ENCODE measurements at regions of chr9 and their contacts with region 1.

Region 1: DNA sequence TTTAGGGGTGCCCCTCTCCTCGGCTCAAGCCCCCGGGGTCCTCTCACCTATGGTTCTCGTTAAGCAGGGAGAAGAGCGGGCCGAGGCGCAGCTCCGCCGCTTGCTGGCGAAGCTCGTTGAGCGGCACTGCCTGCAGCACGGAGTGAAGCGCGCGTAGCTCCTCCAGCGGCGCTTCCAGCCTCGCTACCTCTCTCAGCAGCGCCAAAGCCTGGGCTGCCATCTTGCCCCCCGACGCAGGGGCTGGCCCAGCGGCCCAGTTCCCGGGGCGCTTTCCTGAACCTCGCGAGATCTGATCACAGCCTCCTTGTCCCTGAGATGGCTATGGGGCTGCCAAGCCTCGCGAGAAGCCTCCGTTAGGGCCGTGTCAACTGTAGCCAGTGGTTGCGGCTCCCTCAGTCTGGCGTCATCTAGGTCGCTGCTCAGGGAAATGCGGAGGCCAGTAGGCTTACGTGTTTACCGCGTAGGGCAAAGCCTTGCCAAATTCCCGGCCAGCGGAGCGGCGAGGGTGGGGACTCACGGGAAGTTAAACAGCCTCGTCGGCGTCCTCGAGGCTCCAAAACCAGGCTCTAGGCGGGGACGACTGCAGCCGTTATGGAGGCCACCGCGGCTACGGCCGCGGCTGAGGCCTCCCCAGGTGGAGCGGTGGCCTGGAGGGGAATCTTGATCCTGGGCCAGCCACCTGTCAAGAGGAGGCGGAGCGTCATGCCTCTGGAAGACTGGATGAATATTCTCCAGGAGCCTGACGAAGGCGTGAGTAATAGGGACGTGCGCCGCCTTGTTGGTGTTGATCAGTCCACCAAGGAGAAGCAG is at the start of gene PSMD5:
- DNase-seq: peak; percentile 89 to 99 (median 92)
- ATAC-seq: peak; percentile 86
- H3K4me3 ChIP-seq: peak within 1 kb of the TSS; percentile 93
- H3K4me3 Mint-ChIP-seq: peak within 1 kb of the TSS; percentile 96
- H3K27ac ChIP-seq: peak within 1 kb of the TSS; percentile 93 to 98
- H3K27ac Mint-ChIP-seq: peak within 1 kb of the TSS; percentile 99
- H3K4me1 ChIP-seq: peaks cover 63% of the 10 kb centered on the region
- H3K4me1 Mint-ChIP-seq: peaks cover 79% of the 10 kb centered on the region
- H3K27me3 ChIP-seq: no peaks in the 10 kb centered on the region
- H3K27me3 Mint-ChIP-seq: no peaks in the 10 kb centered on the region
- CTCF ChIP-seq: no peak
- total RNA-seq, gene PSMD5: 35.4 to 44.3 TPM

Region 2: DNA sequence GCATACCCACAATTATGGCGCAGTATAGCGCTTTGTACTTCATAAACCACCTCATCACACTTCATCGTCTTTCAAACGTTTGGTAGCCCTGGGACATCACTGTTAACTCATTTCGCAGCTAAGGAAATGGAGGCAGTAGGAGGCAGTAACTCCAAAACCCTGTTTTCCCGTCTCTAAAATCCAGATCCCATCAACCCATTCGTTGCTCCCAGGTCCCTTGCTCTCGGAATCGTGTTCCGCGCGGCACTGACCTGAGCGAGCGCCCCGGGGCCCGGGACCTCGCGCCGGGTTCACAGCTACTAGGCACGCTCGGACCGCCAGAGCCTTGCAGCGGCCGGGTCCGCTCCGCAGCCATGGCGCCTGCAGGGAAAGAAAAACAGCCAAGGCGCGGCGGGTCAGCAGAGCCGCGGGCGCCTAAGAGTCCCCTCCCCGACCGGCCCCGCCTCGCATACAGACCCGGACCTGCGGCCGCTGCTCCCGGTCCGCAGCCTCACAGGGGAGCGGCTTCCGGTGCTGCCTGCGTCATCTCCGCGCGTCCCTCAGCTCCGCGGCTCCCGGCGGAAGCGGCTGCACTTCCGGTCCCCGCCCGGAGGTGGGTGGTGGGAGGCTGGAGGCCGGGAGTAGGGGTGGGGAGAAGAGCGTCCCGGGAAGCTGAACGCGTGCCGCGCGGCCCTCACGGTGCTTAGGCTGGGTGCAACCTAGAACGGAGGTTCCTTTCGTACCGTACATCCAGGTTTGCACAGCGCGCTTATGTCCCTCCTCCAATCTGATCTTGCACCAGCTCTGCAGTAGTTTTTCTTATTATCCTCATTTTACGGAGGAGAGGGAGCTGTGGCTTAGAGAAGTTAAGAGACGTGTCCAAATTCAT is 49.8 kb before region 1 on chr9 and contains the start of gene FBXW2:
- CTCF ChIA-PET with region 1: interaction called, 4 read pairs
- POLR2A ChIA-PET with region 1: interaction called, 54 read pairs
- intact Hi-C with region 1: loop called (anchors 2 kb)
- DNase-seq: peak; percentile 58 to 92 (median 78)
- ATAC-seq: peak; percentile 79
- H3K4me3 ChIP-seq: peak within 1 kb of the TSS; percentile 97
- H3K4me3 Mint-ChIP-seq: peak within 1 kb of the TSS; percentile 88
- H3K27ac ChIP-seq: peak within 1 kb of the TSS; percentile 81 to 82
- H3K27ac Mint-ChIP-seq: peak within 1 kb of the TSS; percentile 92
- H3K4me1 ChIP-seq: peaks cover 39% of the 10 kb centered on the region
- H3K4me1 Mint-ChIP-seq: peaks cover 63% of the 10 kb centered on the region
- H3K27me3 ChIP-seq: no peaks in the 10 kb centered on the region
- H3K27me3 Mint-ChIP-seq: no peaks in the 10 kb centered on the region
- CTCF ChIP-seq: no peak
- total RNA-seq, gene FBXW2: 58.7 to 64.7 TPM

Region 3: GRCh38 chr9:120875954-120876841 is 33.3 kb after region 1 on chr9:
- CTCF ChIA-PET with region 1: interaction called, 4 read pairs
- POLR2A ChIA-PET with region 1: interaction called, 19 read pairs
- intact Hi-C with region 1: no loop called
- DNase-seq: peak; percentile 53 to 93 (median 84)
- ATAC-seq: peak; percentile 49
- H3K4me3 ChIP-seq: peak overlapping the region; percentile 64
- H3K4me3 Mint-ChIP-seq: peak overlapping the region; percentile 85
- H3K27ac ChIP-seq: peak overlapping the region; percentile 87 to 93
- H3K27ac Mint-ChIP-seq: peak overlapping the region; percentile 84
- H3K4me1 ChIP-seq: peaks cover 83% of the 10 kb centered on the region
- H3K4me1 Mint-ChIP-seq: peaks cover 75% of the 10 kb centered on the region
- H3K27me3 ChIP-seq: no peaks in the 10 kb centered on the region
- H3K27me3 Mint-ChIP-seq: no peaks in the 10 kb centered on the region
- CTCF ChIP-seq: no peak

Region 4: DNA sequence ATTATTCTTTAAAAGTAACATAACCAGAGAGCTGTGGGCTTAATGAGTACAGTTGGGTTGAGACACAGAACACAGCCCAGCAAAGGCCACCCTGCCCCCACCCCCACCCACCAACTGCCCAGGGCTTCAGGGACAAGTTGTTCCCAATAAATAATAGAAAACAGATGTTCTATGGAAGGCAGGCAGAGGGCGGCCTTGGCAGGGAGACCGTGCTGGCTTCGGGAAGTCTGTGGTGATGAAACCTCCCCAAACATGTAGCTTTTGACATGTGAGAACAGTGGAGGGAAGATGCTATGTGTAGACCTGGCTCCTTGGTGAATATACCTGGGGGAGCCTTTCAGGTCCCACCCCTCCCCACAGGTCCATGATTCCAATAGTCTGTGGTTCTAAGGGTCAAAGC is 73.7 kb after region 1 on chr9:
- CTCF ChIA-PET with region 1: no interaction called
- POLR2A ChIA-PET with region 1: interaction called, 12 read pairs
- intact Hi-C with region 1: no loop called
- DNase-seq: no peak
- ATAC-seq: no peak
- H3K4me3 ChIP-seq: no peak overlapping the region
- H3K4me3 Mint-ChIP-seq: no peak overlapping the region
- H3K27ac ChIP-seq: peak overlapping the region; percentile 43
- H3K27ac Mint-ChIP-seq: peak overlapping the region; percentile 90
- H3K4me1 ChIP-seq: peaks cover 96% of the 10 kb centered on the region
- H3K4me1 Mint-ChIP-seq: peaks cover 88% of the 10 kb centered on the region
- H3K27me3 ChIP-seq: no peaks in the 10 kb centered on the region
- H3K27me3 Mint-ChIP-seq: no peaks in the 10 kb centered on the region
- CTCF ChIP-seq: no peak

Region 5: GRCh38 chr9:121059998-121060636 is 217.2 kb after region 1 on chr9:
- CTCF ChIA-PET with region 1: interaction called, 3 read pairs
- POLR2A ChIA-PET with region 1: interaction called, 7 read pairs
- intact Hi-C with region 1: loop called in 1 of 2 experiments (anchors 1 kb)
- DNase-seq: peak in 7 of 14 experiments; percentile 9 to 76 (median 59)
- ATAC-seq: no peak
- H3K4me3 ChIP-seq: no peak overlapping the region
- H3K4me3 Mint-ChIP-seq: no peak overlapping the region
- H3K27ac ChIP-seq: no peak overlapping the region
- H3K27ac Mint-ChIP-seq: no peak overlapping the region
- H3K4me1 ChIP-seq: peaks cover 5% of the 10 kb centered on the region
- H3K4me1 Mint-ChIP-seq: peaks cover 18% of the 10 kb centered on the region
- H3K27me3 ChIP-seq: no peaks in the 10 kb centered on the region
- H3K27me3 Mint-ChIP-seq: no peaks in the 10 kb centered on the region
- CTCF ChIP-seq: peak; percentile 77

Region 6: DNA sequence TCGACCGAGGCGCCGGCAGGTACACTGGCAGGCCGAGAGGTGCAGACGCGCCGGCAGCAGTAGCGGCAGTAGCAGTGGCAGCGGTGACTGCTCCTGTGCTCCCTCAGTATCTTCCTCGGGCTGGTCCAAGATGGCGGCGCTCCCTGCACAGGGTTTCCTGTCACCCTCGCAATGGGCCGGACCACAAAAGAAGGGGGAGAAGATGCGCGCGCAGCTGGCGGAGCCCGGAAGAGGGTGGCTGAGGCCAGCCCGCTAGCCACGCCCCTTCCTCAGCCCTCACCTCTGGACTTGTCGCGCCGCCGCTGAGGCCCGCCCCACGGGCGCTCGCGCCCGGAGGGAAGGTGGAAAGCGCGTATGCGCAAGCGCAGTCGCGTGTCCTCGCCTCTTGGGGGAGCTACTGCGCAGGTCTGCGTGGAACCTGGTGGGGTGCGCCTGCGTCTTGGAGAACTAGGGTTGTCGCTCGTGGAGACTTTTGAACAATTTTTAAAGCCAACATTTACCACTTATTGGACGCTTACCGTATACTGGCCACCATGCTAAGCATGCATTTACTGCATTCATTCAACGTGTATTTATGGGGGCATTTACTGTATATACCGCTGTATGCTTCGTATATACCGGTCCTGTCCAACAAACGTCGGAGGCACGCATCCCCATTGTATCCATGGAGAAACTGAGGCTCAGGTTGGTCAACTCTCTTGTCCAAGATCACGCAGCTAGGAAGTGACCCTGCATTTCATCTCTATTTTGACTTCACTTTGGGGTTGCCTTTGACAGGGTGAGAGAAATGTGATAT is 359.0 kb after region 1 on chr9 and contains the start of gene RAB14:
- CTCF ChIA-PET with region 1: no interaction called
- POLR2A ChIA-PET with region 1: interaction called, 3 read pairs
- intact Hi-C with region 1: loop called in 1 of 2 experiments (anchors 5 kb)
- DNase-seq: peak; percentile 100
- ATAC-seq: peak; percentile 89
- H3K4me3 ChIP-seq: peak within 1 kb of the TSS; percentile 75
- H3K4me3 Mint-ChIP-seq: peak within 1 kb of the TSS; percentile 96
- H3K27ac ChIP-seq: peak within 1 kb of the TSS; percentile 76 to 87
- H3K27ac Mint-ChIP-seq: peak within 1 kb of the TSS; percentile 91
- H3K4me1 ChIP-seq: peaks cover 11% of the 10 kb centered on the region
- H3K4me1 Mint-ChIP-seq: peaks cover 49% of the 10 kb centered on the region
- H3K27me3 ChIP-seq: no peaks in the 10 kb centered on the region
- H3K27me3 Mint-ChIP-seq: no peaks in the 10 kb centered on the region
- CTCF ChIP-seq: peak; percentile 62
- total RNA-seq, gene RAB14: 57.4 to 58.2 TPM

Region 7: GRCh38 chr9:121698627-121699570 is 856.0 kb after region 1 on chr9:
- CTCF ChIA-PET with region 1: no interaction called
- POLR2A ChIA-PET with region 1: no interaction called
- intact Hi-C with region 1: no loop called
- DNase-seq: peak in 10 of 14 experiments; percentile 5 to 68 (median 34)
- ATAC-seq: peak; percentile 34
- H3K4me3 ChIP-seq: no peak overlapping the region
- H3K4me3 Mint-ChIP-seq: no peak overlapping the region
- H3K27ac ChIP-seq: no peak overlapping the region
- H3K27ac Mint-ChIP-seq: no peak overlapping the region
- H3K4me1 ChIP-seq: peaks cover 16% of the 10 kb centered on the region
- H3K4me1 Mint-ChIP-seq: peaks cover 6% of the 10 kb centered on the region
- H3K27me3 ChIP-seq: peaks cover 31 to 43% of the 10 kb centered on the region in 2 experiments
- H3K27me3 Mint-ChIP-seq: peaks cover 57% of the 10 kb centered on the region
- CTCF ChIP-seq: no peak